Dorsolateral prefrontal cortex (tissue), 120 donors: ENCODE measurements at regions of chr13 and their contacts with region 1.

Region 1: DNA sequence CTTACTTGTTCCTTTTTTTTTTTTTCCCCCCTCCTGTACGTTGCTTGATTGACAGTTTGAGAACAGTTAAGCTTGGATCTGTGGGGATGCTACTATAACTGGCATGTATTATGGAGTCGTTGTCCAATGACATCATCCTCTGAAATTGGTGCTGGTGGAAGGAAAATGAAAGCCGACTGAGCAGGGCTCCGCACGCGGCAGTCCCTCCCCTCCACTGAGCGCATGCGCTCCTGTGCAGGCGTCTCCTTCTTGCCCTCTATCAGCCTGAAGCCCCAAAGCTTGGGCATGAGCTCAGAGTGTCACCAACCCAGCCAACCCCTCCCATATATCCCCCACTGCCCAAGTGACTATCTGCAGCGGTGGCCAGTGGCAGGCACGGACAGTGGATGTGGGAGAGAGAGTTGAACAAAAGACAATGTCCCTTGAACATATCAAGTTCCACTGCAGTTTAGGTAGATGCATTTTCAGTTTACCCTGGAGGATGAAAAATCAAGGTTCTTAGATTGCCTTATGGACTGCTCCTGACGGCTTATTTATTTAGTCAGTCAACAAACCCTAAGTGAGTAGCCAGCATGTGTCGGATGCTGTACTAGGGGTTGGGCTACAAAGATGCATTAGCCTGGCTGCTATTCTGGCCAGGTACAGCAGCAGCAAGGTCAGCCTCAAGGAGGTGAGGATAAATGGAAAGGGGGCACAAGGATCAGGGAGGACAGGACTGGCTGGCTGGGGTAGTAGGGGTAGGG is 20.8 kb downstream of the MBNL2 start:
- DNase-seq: peak in 9 of 10 donors; percentile 78 to 89 (median 84)
- H3K4me3 ChIP-seq: peak overlapping the region in 50 of 59 donors; percentile 0 to 59 (median 31)
- H3K27ac ChIP-seq: peak overlapping the region; percentile 42 to 99 (median 94)
- H3K27me3 ChIP-seq: no peaks in the 10 kb centered on the region
- CTCF ChIP-seq: peak in 11 of 56 donors; percentile 6 to 25 (median 11)

Region 2: GRCh38 chr13:97194479-97194878 is 48.4 kb before region 1 on chr13:
- intact Hi-C with region 1: no loop called
- DNase-seq: no peak
- H3K4me3 ChIP-seq: no peak overlapping the region
- H3K27ac ChIP-seq: no peak overlapping the region
- H3K27me3 ChIP-seq: no peaks in the 10 kb centered on the region
- CTCF ChIP-seq: no peak

Region 3: GRCh38 chr13:97344265-97345175 is 101.6 kb after region 1 on chr13:
- intact Hi-C with region 1: loop called (anchors 5 kb)
- DNase-seq: peak in 9 of 10 donors; percentile 60 to 85 (median 76)
- H3K4me3 ChIP-seq: peak overlapping the region in 5 of 59 donors; percentile 1 to 30 (median 11)
- H3K27ac ChIP-seq: peak overlapping the region in 57 of 59 donors; percentile 10 to 89 (median 72)
- H3K27me3 ChIP-seq: no peaks in the 10 kb centered on the region
- CTCF ChIP-seq: peak; percentile 39 to 86 (median 74)